ENCODE measurements at regions of chr4 and their contacts with region 1.

Region 1: DNA sequence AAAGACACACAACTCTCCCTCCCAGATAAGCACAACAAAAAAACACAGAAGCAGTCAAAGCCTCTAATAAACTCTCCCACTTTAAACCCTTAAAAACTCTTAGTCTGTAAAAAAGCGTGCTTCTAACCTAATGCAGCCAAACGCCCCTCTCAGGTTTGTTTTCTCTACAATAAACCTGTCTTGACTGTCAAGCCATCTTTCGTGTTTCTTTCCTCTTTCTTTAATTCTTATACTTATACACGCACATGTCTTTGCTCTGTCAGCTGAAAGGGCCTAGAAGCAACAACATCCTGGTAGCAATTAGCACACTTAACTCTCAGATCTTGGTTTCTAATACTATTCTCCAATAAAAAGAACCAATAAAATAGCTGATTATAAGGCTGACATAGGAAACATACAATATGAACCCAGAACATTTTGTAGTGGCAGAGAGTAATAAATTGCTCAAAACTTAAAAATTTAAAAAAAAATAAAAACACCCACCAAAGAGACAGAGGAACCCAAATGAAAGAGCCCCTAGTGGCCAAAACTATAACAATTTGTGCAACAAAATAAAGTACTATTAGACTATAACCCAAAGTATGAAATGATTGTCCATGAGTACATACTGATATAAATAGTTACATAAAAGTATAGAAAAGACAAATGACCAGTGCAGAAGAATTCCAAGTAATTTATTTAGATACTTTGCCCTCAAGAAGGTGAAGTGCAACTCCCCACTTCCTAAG is 440.4 kb upstream of the ADGRL3 start:
- DNase-seq: no peak
- H3K4me3 Mint-ChIP-seq: no peak overlapping the region
- H3K27ac Mint-ChIP-seq: no peak overlapping the region
- H3K4me1 Mint-ChIP-seq: no peaks in the 10 kb centered on the region
- H3K27me3 Mint-ChIP-seq: no peaks in the 10 kb centered on the region

Region 2: GRCh38 chr4:60366661-60367060 is 393.0 kb before region 1 on chr4:
- intact Hi-C with region 1: no loop called
- DNase-seq: no peak
- H3K4me3 Mint-ChIP-seq: no peak overlapping the region
- H3K27ac Mint-ChIP-seq: no peak overlapping the region
- H3K4me1 Mint-ChIP-seq: no peaks in the 10 kb centered on the region
- H3K27me3 Mint-ChIP-seq: no peaks in the 10 kb centered on the region

Region 3: GRCh38 chr4:60744767-60745166 is 14.9 kb before region 1 on chr4:
- intact Hi-C with region 1: loop called (anchors 1 kb)
- DNase-seq: no peak
- H3K4me3 Mint-ChIP-seq: no peak overlapping the region
- H3K27ac Mint-ChIP-seq: no peak overlapping the region
- H3K4me1 Mint-ChIP-seq: no peaks in the 10 kb centered on the region
- H3K27me3 Mint-ChIP-seq: no peaks in the 10 kb centered on the region

Region 4: DNA sequence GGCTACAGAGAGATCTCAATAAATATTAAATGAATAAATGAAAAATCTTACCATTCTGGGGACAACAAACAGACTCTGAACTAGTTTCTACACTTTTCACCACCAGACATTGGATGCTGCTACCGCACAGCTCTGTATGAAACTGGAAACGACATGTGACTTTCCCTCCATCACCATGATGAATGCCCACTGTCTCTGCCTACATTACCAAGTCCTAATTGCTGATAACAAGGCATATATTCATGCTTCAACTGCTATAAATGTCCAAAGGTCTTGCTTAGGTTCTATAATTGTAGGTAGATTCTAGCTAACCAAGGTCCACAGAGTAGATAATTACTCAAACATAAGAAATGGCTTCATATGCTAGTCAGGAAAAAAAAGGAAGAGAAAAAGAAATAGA is 41.0 kb after region 1 on chr4:
- intact Hi-C with region 1: loop called (anchors 1 kb)
- DNase-seq: no peak
- H3K4me3 Mint-ChIP-seq: no peak overlapping the region
- H3K27ac Mint-ChIP-seq: no peak overlapping the region
- H3K4me1 Mint-ChIP-seq: no peaks in the 10 kb centered on the region
- H3K27me3 Mint-ChIP-seq: no peaks in the 10 kb centered on the region

Region 5: DNA sequence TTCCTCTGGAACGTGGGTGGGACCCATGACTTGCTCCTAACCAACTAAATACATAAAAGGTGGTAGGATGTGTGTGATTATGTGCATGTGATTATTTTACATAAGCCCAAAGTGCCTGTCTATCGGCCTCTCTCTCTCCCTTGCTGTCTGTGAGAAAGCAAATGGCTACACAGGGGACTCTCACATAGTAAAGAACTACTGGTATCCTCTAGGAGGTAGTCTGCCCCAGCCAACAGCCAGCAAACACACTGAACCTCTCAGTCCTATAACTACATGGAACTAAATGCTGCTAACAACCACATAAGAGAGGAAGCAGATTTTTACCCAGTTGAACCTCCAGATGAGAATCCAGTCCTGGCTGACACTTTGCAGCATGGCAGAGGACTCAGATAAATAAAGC is 1689.9 kb after region 1 on chr4:
- intact Hi-C with region 1: no loop called
- DNase-seq: no peak
- H3K4me3 Mint-ChIP-seq: no peak overlapping the region
- H3K27ac Mint-ChIP-seq: no peak overlapping the region
- H3K4me1 Mint-ChIP-seq: no peaks in the 10 kb centered on the region
- H3K27me3 Mint-ChIP-seq: no peaks in the 10 kb centered on the region

Measured in activated T-helper 1 cell treated with anti-CD3 and anti-CD28 coated beads, Interleukin-12 subunit alpha, Interleukin-12 subunit beta, Interleukin-2, Interleukin-4 antibody, amounts not matched to agents 30 ng/mL and 10 ng/mL and 1 ng/mL, durations not matched to agents 14 hours and 24 hours and 36 hours (primary cell).